ENCODE measurements at regions of chr9 and their contacts with region 1.

Region 1: GRCh38 chr9:93108291-93109041 is 12.4 kb downstream of the CARD19 start:
- DNase-seq: peak; percentile 66
- ATAC-seq: peak; percentile 80
- H3K4me3 Mint-ChIP-seq: no peak overlapping the region
- H3K27ac Mint-ChIP-seq: no peak overlapping the region
- H3K4me1 Mint-ChIP-seq: peaks cover 42% of the 10 kb centered on the region
- H3K27me3 Mint-ChIP-seq: no peaks in the 10 kb centered on the region
- CTCF ChIP-seq: no peak

Region 2: DNA sequence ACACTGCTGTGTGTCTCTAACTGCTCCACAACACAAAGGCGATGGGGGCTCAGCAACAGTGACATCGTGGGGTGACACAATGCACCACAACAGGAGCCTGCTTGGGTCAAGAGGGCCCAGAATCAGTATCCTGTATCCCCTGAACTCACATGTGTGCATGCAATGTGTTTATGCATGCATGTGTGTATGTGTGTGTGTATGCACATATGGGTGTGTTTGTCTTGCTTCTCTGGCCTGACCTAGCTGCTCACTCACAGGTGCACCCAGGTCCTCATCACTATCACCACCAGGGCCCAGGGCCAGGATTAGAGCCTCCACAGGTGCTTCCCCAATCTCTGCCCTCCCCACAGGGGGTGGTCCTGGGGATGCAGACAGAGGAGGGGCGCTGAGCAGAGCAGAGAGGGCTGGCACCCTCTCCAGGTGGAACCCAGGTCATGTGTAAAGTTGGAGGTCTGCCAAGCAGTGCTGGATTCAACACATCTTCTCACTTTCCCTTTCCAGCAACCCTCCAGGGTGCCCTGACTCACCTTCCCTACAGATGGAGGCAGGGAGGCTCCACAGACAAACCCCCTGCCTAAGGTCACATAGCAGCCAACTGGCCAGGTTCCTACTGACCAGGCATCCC is 212.5 kb before region 1 on chr9:
- CTCF ChIA-PET with region 1: no interaction called
- POLR2A ChIA-PET with region 1: no interaction called
- intact Hi-C with region 1: no loop called
- DNase-seq: peak; percentile 24
- ATAC-seq: no peak
- H3K4me3 Mint-ChIP-seq: no peak overlapping the region
- H3K27ac Mint-ChIP-seq: no peak overlapping the region
- H3K4me1 Mint-ChIP-seq: peaks cover 5% of the 10 kb centered on the region
- H3K27me3 Mint-ChIP-seq: no peaks in the 10 kb centered on the region
- CTCF ChIP-seq: no peak

Region 3: DNA sequence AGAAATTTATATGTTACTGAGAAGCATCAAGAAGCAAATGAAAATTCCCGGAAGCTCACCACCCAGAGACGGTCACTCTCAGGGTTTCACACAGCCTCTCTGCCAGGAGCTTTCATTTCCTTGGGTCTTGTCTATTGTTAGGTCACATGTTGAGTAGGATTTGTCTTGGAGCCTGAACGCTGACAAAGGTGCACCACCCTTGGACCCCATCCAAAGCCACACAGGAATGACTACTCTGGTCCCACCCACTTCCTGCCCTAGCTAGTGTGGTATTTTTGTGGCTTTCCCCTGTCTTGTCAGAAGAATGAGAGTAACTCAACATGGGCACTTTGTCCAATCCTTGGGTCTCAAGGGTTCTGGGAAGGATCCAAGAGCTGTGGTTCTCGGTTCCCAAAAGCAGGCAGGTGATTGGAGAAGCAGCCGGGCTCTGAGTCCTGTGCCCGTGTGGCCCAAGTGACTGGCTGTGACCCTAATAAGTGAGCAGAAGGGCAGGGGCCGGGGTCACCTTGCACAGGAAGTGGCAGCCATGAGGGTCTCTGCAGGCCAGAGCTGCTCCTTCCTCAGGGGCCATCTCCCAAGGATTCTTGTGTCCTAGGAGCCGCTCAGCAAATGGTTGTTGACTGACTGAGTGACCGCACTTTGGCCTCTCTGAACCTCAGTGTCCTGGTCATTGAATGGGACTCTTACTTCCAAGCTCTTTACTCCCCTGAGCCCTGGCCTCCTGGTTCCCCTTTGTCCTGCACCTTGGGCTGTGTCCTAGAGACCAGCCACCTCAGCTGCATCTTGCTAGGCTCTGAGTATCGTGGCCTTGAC is 154.2 kb before region 1 on chr9:
- CTCF ChIA-PET with region 1: interaction called, 10 read pairs
- POLR2A ChIA-PET with region 1: no interaction called
- intact Hi-C with region 1: no loop called
- DNase-seq: peak; percentile 93
- ATAC-seq: peak; percentile 90
- H3K4me3 Mint-ChIP-seq: peak overlapping the region; percentile 63
- H3K27ac Mint-ChIP-seq: peak overlapping the region; percentile 97
- H3K4me1 Mint-ChIP-seq: peaks cover 61% of the 10 kb centered on the region
- H3K27me3 Mint-ChIP-seq: no peaks in the 10 kb centered on the region
- CTCF ChIP-seq: no peak

Region 4: DNA sequence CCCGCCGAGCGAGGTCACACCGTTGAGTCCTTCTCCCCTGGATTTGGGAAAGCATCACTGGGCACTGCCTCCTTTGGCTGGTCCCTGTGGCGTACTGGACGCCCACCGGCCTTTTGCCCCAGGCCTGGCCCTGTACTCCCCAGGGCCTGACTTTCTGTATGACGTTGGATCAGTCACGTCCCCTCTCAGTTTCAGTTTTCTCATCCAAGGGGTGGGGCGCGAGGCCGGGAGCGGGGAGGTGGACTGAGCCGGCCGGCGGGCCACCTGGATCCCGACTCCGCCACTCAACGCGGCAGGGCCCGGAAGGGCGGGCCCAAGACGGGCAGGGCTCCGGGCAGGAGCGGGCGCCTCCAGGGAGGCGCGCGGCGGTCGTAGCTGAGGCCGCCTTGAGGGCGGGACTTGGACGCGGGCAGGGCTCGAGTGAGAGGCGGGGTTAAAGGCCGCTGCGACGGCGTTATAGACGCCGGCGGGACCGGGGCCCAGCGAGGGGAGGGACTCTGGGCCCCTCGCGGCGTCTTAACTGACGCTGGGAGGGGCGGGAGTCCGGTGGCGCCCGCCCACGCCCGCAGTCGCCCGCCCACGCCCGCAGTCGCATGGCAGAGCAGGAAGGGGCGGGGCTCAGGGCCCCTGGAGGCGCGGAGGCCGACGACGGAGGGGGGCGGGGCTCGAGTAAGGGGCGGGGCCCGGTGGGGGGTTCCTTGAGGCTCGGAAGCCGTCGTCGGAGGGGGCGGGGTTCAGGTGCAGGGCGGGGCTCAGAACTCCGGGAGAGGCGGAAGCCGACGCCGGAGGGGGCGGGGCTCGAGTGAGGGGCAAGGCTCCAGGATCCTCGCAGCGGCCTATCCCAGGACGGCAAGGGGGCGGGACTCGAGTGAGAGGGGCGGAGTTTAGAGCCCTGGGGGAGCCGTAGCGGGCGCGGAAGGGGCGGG is 13.0 kb before region 1 on chr9:
- CTCF ChIA-PET with region 1: interaction called, 25 read pairs
- POLR2A ChIA-PET with region 1: interaction called, 5 read pairs
- intact Hi-C with region 1: no loop called
- DNase-seq: peak; percentile 100
- ATAC-seq: peak; percentile 82
- H3K4me3 Mint-ChIP-seq: peak overlapping the region; percentile 86
- H3K27ac Mint-ChIP-seq: peak overlapping the region; percentile 97
- H3K4me1 Mint-ChIP-seq: peaks cover 67% of the 10 kb centered on the region
- H3K27me3 Mint-ChIP-seq: no peaks in the 10 kb centered on the region
- CTCF ChIP-seq: no peak

Region 5: DNA sequence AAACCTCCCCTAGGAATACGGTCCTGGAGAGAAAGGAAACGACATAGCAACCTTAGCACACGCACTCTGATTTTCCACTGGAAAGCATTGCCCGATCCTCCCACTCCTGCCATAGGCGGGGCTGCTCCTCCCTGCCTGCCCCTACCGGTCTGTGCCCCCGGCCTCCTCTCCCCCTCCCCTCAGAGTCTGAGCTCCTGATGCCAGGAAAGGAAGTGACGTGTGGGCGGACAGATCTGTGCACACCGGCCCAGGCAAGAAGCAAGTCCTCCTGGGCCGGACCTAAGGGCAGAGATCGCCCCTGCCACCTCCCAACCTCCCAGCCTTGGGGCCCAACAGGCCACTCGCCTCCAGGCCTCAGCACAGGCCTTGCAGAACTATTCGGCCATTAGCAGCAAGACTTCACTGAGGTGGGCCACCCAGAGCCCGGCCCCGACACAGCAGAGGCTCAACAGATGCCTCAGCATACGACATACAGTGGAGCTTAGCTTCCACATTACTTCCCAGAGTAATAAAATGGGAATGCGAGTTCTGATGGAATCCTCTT is 18.4 kb after region 1 on chr9:
- CTCF ChIA-PET with region 1: interaction called, 27 read pairs
- POLR2A ChIA-PET with region 1: interaction called, 22 read pairs
- intact Hi-C with region 1: no loop called
- DNase-seq: peak; percentile 61
- ATAC-seq: peak; percentile 69
- H3K4me3 Mint-ChIP-seq: peak overlapping the region; percentile 55
- H3K27ac Mint-ChIP-seq: peak overlapping the region; percentile 87
- H3K4me1 Mint-ChIP-seq: peaks cover 56% of the 10 kb centered on the region
- H3K27me3 Mint-ChIP-seq: no peaks in the 10 kb centered on the region
- CTCF ChIP-seq: no peak

Region 6: GRCh38 chr9:93143830-93144530 is 35.5 kb after region 1 on chr9:
- CTCF ChIA-PET with region 1: interaction called, 10 read pairs
- POLR2A ChIA-PET with region 1: no interaction called
- intact Hi-C with region 1: no loop called
- DNase-seq: peak; percentile 67
- ATAC-seq: peak; percentile 58
- H3K4me3 Mint-ChIP-seq: no peak overlapping the region
- H3K27ac Mint-ChIP-seq: peak overlapping the region; percentile 91
- H3K4me1 Mint-ChIP-seq: peaks cover 65% of the 10 kb centered on the region
- H3K27me3 Mint-ChIP-seq: no peaks in the 10 kb centered on the region
- CTCF ChIP-seq: no peak

Region 7: DNA sequence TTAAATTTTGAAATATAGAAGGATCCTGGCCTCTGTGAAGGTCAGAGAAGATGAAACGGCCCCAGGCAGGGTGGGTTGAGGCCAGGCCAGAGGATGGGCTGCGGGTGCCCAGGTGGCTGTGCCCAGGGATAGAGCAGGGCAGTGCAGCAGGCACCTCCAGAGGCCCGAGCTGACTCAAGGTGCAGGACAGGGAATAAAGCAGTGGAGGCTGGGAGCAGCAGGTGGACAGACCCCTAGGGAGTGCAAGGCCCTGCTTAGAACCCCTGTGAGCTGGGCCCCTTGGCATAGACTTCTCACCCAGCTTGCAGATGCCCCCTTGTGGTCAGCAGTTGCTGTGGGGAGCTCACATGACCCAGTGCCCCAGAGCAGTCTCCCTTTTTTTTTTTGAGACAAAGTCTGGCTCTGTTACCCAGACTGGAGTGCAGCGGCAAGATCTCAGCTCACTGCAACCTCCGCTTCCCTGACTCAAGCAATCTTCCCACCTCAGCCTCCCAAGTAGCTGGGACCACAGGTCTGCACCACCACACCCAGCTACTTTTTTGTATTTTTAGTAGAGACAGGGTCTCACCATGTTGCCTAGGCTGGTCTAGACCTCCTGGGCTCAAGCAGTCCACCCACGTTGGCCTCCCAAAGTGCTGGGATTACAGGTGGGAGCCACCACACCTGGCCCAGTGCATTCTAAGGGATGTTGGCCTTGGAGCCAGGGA is 194.2 kb after region 1 on chr9:
- CTCF ChIA-PET with region 1: interaction called, 19 read pairs
- POLR2A ChIA-PET with region 1: no interaction called
- intact Hi-C with region 1: no loop called
- DNase-seq: peak; percentile 78
- ATAC-seq: peak; percentile 85
- H3K4me3 Mint-ChIP-seq: no peak overlapping the region
- H3K27ac Mint-ChIP-seq: no peak overlapping the region
- H3K4me1 Mint-ChIP-seq: no peaks in the 10 kb centered on the region
- H3K27me3 Mint-ChIP-seq: no peaks in the 10 kb centered on the region
- CTCF ChIP-seq: peak; percentile 33